ENCODE measurements at regions of chr3 and their contacts with region 1.

Region 1: DNA sequence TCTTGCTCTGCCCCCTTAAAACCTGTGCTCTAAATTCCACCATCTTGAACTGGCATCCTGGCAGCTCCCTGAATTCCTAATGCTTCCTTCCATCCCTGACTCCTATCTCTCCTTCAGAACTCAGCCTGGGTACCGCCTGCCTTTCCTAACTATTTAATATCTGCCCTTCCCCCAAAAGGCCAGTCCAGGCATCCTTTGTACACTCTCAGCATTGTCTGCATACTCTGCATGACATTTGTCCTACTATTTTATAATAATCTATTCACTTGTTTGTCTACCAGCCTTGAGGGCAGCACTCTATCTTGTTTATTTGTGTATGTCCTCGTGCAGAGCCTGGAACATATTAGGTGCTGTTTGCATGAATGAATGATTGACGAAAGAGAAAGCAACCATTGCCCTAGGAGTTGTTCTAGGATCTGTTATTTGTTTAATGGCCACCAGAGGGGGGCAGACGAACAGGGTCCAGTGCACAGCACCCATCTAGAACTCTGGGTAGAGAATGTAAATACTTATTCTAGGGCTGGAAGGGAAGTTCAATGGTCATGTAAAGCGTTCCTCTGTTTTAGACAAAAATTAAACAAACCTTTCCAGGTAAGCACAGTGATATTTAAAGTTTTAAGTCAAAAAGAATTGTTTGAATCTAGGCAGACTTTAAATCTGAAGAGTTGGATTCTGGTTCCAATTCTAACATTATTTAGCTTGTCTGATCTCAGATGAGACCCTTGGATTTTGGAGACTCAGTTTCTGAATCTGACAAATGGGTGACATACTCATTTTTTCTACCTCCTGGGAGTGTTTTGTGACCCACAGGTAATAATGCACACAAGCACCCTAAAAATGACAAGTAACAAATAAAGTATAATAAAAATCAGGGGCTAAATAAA is 125.8 kb upstream of the GALNT15 start:
- DNase-seq: peak in 1 of 3 donors; percentile 78
- ATAC-seq: peak; percentile 96
- H3K4me3 ChIP-seq: no peak overlapping the region
- H3K4me1 ChIP-seq: peaks cover 3% of the 10 kb centered on the region
- CTCF ChIP-seq: peak; percentile 54

Region 2: GRCh38 chr3:16177962-16178627 is 129.4 kb after region 1 on chr3:
- intact Hi-C with region 1: loop called (anchors 2 to 5 kb)
- DNase-seq: peak; percentile 75 to 86 (median 83)
- ATAC-seq: peak; percentile 89
- H3K4me3 ChIP-seq: no peak overlapping the region
- H3K4me1 ChIP-seq: no peaks in the 10 kb centered on the region
- CTCF ChIP-seq: peak; percentile 95

Measured in mucosa of descending colon (tissue), 3 donors.